Activated naive CD4-positive, alpha-beta T cell treated with anti-CD3 and anti-CD28 coated beads, Interleukin-2, amount 10 ng/mL, durations not matched to agents 7 days and 5 days (primary cell): ENCODE measurements at regions of chr6 and their contacts with region 1.

Region 1: GRCh38 chr6:80094017-80094416 is 12.5 kb upstream of the BCKDHB start:
- DNase-seq: peak; percentile 25
- H3K4me3 Mint-ChIP-seq: no peak overlapping the region
- H3K27ac Mint-ChIP-seq: no peak overlapping the region
- H3K4me1 Mint-ChIP-seq: peaks cover 8% of the 10 kb centered on the region
- H3K27me3 Mint-ChIP-seq: peaks cover 6% of the 10 kb centered on the region

Region 2: GRCh38 chr6:79949233-79949632 is 144.8 kb before region 1 on chr6:
- CTCF ChIA-PET with region 1: interaction called, 45 read pairs
- DNase-seq: peak; percentile 76
- H3K4me3 Mint-ChIP-seq: no peak overlapping the region
- H3K27ac Mint-ChIP-seq: no peak overlapping the region
- H3K4me1 Mint-ChIP-seq: peaks cover 16% of the 10 kb centered on the region
- H3K27me3 Mint-ChIP-seq: peaks cover 49% of the 10 kb centered on the region